MCF 10A (cell line): ENCODE measurements at regions of chr12 and their contacts with region 1.

Region 1: GRCh38 chr12:53039851-53040250 is 10.0 kb upstream of the TNS2 start:
- DNase-seq: no peak
- H3K4me3 Mint-ChIP-seq: no peak overlapping the region
- H3K27ac Mint-ChIP-seq: no peak overlapping the region
- H3K4me1 Mint-ChIP-seq: peaks cover 13% of the 10 kb centered on the region
- H3K27me3 Mint-ChIP-seq: no peaks in the 10 kb centered on the region
- CTCF ChIP-seq: no peak

Region 2: DNA sequence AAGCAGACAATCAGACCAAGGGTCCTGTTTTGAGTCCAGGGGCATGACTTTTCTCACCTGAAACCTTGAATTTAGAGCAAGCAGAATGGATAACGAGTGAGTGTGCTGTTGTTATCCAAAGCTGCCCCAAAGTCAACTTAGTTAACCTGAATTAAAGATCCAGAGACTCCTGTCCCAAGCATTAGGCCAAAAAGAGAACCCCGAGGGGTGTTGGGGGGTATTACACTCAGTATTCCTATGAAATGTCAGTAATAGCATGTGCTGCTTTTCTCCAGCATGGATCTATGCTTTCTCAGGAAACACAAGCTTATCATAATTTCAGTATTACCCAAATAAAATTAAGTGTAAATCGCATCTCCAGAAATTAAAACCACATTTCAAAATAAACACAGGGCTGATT is 14.6 kb before region 1 on chr12:
- CTCF ChIA-PET with region 1: interaction called, 10 read pairs
- POLR2A ChIA-PET with region 1: interaction called, 4 read pairs
- intact Hi-C with region 1: no loop called
- DNase-seq: no peak
- H3K4me3 Mint-ChIP-seq: no peak overlapping the region
- H3K27ac Mint-ChIP-seq: no peak overlapping the region
- H3K4me1 Mint-ChIP-seq: peaks cover 3% of the 10 kb centered on the region
- H3K27me3 Mint-ChIP-seq: no peaks in the 10 kb centered on the region
- CTCF ChIP-seq: no peak

Region 3: GRCh38 chr12:53054112-53054833 is 14.4 kb after region 1 on chr12:
- CTCF ChIA-PET with region 1: interaction called, 11 read pairs
- POLR2A ChIA-PET with region 1: interaction called, 16 read pairs
- intact Hi-C with region 1: no loop called
- DNase-seq: peak; percentile 98
- H3K4me3 Mint-ChIP-seq: peak overlapping the region; percentile 80
- H3K27ac Mint-ChIP-seq: peak overlapping the region; percentile 97
- H3K4me1 Mint-ChIP-seq: peaks cover 32% of the 10 kb centered on the region
- H3K27me3 Mint-ChIP-seq: no peaks in the 10 kb centered on the region
- CTCF ChIP-seq: no peak

Region 4: GRCh38 chr12:53098982-53099651 is 59.3 kb after region 1 on chr12:
- CTCF ChIA-PET with region 1: interaction called, 3 read pairs
- POLR2A ChIA-PET with region 1: no interaction called
- intact Hi-C with region 1: loop called (anchors 2 kb)
- DNase-seq: peak; percentile 92
- H3K4me3 Mint-ChIP-seq: peak overlapping the region; percentile 73
- H3K27ac Mint-ChIP-seq: peak overlapping the region; percentile 76
- H3K4me1 Mint-ChIP-seq: peaks cover 26% of the 10 kb centered on the region
- H3K27me3 Mint-ChIP-seq: no peaks in the 10 kb centered on the region
- CTCF ChIP-seq: peak; percentile 92

Region 5: DNA sequence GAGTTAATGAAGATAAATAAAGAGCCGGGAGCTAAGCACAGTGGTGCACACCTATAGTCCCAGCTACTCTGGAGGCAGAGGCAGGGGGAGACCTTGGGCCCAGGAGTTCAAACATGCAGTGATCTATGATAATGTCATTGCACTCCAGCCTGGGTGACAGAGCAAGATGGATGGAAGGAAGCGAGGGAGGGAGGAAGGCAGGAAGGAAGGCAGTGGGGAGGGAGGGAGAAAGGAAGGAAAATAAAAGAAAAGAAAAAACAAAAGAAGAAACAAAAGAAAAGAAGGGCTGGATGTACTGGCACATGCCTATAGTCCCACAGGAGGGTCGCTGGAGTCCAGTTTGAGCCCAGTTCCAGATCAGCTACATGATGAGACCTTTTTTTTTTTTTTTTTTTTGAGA is 315.3 kb after region 1 on chr12:
- CTCF ChIA-PET with region 1: no interaction called
- POLR2A ChIA-PET with region 1: no interaction called
- intact Hi-C with region 1: no loop called
- DNase-seq: no peak
- H3K4me3 Mint-ChIP-seq: no peak overlapping the region
- H3K27ac Mint-ChIP-seq: no peak overlapping the region
- H3K4me1 Mint-ChIP-seq: peaks cover 8% of the 10 kb centered on the region
- H3K27me3 Mint-ChIP-seq: no peaks in the 10 kb centered on the region
- CTCF ChIP-seq: no peak

Region 6: DNA sequence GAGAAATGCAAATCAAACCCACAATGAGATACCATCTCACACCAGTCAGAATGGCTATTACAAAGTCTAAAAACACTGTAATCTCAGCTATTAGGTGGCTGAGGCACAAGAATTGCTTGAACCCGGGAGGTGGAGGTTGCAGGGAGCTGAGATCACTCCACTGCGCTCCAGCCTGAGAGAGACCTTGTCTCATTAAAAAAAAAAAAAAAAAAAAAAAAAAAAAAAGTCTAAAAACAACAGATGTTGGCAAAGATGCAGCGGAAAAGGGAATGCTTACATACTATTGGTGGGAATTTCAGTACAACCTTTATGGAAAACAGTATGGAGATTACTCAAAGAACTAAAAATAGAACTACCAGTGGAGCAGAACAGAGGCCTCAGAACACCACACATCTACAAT is 605.3 kb after region 1 on chr12:
- CTCF ChIA-PET with region 1: no interaction called
- POLR2A ChIA-PET with region 1: no interaction called
- intact Hi-C with region 1: no loop called
- DNase-seq: no peak
- H3K4me3 Mint-ChIP-seq: no peak overlapping the region
- H3K27ac Mint-ChIP-seq: no peak overlapping the region
- H3K4me1 Mint-ChIP-seq: no peaks in the 10 kb centered on the region
- H3K27me3 Mint-ChIP-seq: no peaks in the 10 kb centered on the region
- CTCF ChIP-seq: no peak